PC-3 (cell line): ENCODE measurements at regions of chr12 and their contacts with region 1.

Region 1: GRCh38 chr12:62259993-62260732 is at the start of gene USP15:
- DNase-seq: peak; percentile 95
- ATAC-seq: peak; percentile 86
- H3K4me3 ChIP-seq: peak within 1 kb of the TSS; percentile 99
- H3K27ac ChIP-seq: peak within 1 kb of the TSS; percentile 77
- H3K4me1 ChIP-seq: peaks cover 23% of the 10 kb centered on the region
- H3K27me3 ChIP-seq: no peaks in the 10 kb centered on the region
- CTCF ChIP-seq: peak; percentile 64
- total RNA-seq, gene USP15: 39.3 and 46.1 TPM in 2 replicates

Region 2: DNA sequence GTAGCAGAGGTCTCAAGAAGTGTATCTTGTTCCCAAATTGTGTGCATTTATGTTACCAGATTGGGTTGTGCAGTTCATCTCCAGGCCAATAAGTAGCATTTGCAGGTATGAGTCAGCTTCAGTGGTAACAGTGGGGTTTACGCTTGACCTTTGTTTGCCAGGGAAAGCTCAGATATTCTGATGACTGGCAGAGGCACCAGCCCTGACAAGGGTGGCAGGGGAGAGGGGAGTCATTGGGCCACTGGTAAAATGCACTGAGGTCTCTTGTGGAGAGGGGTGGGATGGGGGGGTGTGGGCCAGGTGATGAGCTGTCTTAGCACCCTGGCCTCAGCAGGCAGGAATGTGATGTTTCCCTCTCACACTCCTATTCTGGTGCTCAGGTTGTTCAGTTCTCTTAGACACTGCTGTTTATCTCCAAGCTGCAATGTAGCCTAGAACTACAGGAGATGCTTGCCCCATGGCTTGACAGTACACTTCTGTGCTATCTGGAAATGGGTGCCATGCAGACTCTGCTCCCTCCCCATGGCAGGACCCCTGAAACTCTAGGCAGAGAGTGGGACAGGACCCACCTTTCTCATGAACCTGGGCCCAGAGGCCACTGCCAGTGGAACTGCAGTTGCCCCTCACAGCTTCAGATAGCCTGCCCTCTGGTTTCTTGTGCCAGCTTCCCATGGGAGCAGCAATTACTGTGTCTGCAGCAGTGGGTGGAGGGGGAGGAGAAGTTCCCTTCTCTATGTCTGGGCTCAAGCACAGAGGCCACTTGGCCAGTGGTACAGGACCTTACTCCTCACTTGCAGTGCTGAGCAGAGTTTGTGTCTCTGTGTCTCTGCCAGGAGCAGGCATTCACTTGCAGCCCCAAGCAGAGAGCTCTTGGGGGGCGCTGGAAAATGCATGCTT is 31.9 kb after region 1 on chr12:
- CTCF ChIA-PET with region 1: no interaction called
- POLR2A ChIA-PET with region 1: interaction called, 13 read pairs
- intact Hi-C with region 1: no loop called
- DNase-seq: peak; percentile 54
- ATAC-seq: peak; percentile 37; the same call in 1 of the 2 replicates
- H3K4me3 ChIP-seq: no peak overlapping the region
- H3K27ac ChIP-seq: no peak overlapping the region
- H3K4me1 ChIP-seq: no peaks in the 10 kb centered on the region
- H3K27me3 ChIP-seq: no peaks in the 10 kb centered on the region
- CTCF ChIP-seq: no peak

Region 3: DNA sequence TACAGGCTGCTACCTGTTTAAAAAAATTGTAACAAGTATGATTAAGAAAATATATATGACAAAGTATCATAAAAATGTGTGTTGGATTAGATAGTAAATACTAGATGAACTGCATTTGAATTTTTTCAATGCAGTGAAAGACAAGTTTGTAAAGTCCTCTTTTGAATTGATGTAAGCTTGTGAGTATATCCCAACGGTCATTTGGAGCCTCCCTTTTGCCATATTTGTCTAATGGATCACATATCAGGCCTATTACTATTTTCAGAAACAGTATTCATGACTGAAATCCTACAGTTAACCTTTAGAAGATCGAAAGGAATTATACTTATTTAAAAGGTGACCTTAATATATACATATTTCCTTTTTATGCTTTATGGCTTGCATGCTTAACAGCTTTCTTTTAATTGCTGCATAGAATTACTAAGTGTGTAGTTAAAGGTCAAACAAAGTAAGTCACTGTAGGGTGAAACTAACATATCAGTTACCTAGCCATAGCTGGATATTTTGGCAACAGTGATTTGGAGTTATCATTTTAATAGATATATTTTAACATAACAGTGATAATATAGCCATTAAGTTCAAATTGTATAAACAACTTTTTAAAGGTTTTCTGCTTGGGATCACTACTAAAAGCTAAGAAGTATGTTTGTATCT is 53.7 kb after region 1 on chr12:
- CTCF ChIA-PET with region 1: no interaction called
- POLR2A ChIA-PET with region 1: no interaction called
- intact Hi-C with region 1: loop called (anchors 5 kb)
- DNase-seq: no peak
- ATAC-seq: no peak
- H3K4me3 ChIP-seq: no peak overlapping the region
- H3K27ac ChIP-seq: no peak overlapping the region
- H3K4me1 ChIP-seq: no peaks in the 10 kb centered on the region
- H3K27me3 ChIP-seq: no peaks in the 10 kb centered on the region
- CTCF ChIP-seq: no peak

Region 4: GRCh38 chr12:62347922-62348650 is 87.9 kb after region 1 on chr12:
- CTCF ChIA-PET with region 1: no interaction called
- POLR2A ChIA-PET with region 1: no interaction called
- intact Hi-C with region 1: loop called (anchors 5 kb)
- DNase-seq: peak; percentile 76
- ATAC-seq: peak; percentile 93
- H3K4me3 ChIP-seq: peak overlapping the region; percentile 55; the same call in 1 of the 2 replicates
- H3K27ac ChIP-seq: peak overlapping the region; percentile 87
- H3K4me1 ChIP-seq: peaks cover 19% of the 10 kb centered on the region
- H3K27me3 ChIP-seq: no peaks in the 10 kb centered on the region
- CTCF ChIP-seq: no peak